ENCODE measurements at regions of chr15 and their contacts with region 1.

Region 1: DNA sequence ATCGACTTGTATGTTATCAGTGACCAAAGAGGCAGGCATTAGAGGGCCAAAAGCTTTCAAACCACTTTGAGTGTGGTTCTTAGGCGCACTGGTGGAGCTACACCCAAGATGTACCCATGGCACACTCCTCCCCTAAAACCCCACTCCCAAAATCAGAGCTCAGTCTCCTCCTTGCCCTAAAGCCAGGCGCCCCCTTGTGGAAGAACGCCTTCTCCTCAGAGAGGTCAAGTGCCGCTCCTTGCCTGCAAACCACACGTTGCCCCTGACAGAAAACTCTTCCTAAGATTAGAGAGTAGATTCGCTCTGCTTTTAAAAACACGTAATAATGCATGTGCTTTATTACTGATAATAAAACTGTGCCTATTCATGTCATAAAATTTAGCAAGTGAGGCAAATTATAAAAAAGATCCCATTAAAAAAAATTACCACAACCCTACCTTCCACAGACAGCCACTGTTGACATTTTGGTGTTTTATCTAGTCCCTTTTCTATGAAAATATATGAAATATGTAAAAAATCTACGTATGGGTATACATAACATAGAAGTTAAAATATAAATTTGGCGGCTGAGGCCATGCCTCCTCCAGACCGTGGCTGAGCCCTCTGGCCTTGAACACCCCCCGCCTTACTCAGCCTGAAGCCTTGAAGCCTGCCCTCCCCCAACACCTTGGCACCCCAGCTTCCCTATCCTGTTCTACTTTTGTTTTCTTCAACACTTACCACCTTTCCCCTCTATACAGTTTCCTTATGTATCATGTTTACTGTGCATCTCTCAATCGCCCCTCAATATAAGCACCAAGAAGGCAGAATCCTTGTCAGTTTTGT is 33.5 kb downstream of the BCL2L10 start:
- DNase-seq: peak; percentile 94
- ATAC-seq: peak; percentile 95
- H3K4me3 Mint-ChIP-seq: no peak overlapping the region; the same call in 1 of the 2 replicates
- H3K27ac Mint-ChIP-seq: no peak overlapping the region
- H3K4me1 Mint-ChIP-seq: peaks cover 5% of the 10 kb centered on the region
- H3K27me3 Mint-ChIP-seq: no peaks in the 10 kb centered on the region
- CTCF ChIP-seq: peak; percentile 83

Region 2: GRCh38 chr15:51888593-51889195 is 190.4 kb before region 1 on chr15:
- CTCF ChIA-PET with region 1: interaction called, 11 read pairs
- POLR2A ChIA-PET with region 1: no interaction called
- DNase-seq: no peak
- ATAC-seq: no peak
- H3K4me3 Mint-ChIP-seq: no peak overlapping the region
- H3K27ac Mint-ChIP-seq: no peak overlapping the region
- H3K4me1 Mint-ChIP-seq: no peaks in the 10 kb centered on the region
- H3K27me3 Mint-ChIP-seq: no peaks in the 10 kb centered on the region
- CTCF ChIP-seq: no peak

Region 3: GRCh38 chr15:51924156-51925068 is 154.7 kb before region 1 on chr15:
- CTCF ChIA-PET with region 1: interaction called, 11 read pairs
- POLR2A ChIA-PET with region 1: no interaction called
- DNase-seq: peak; percentile 38
- ATAC-seq: peak; percentile 97
- H3K4me3 Mint-ChIP-seq: no peak overlapping the region
- H3K27ac Mint-ChIP-seq: peak overlapping the region; percentile 11; the same call in 1 of the 2 replicates
- H3K4me1 Mint-ChIP-seq: peaks cover 5% of the 10 kb centered on the region
- H3K27me3 Mint-ChIP-seq: no peaks in the 10 kb centered on the region
- CTCF ChIP-seq: no peak

Region 4: GRCh38 chr15:51971375-51972133 is 107.5 kb before region 1 on chr15 and contains the start of gene LEO1:
- CTCF ChIA-PET with region 1: interaction called, 39 read pairs
- POLR2A ChIA-PET with region 1: no interaction called
- DNase-seq: peak; percentile 88
- ATAC-seq: peak; percentile 90
- H3K4me3 Mint-ChIP-seq: peak within 1 kb of the TSS; percentile 92
- H3K27ac Mint-ChIP-seq: peak within 1 kb of the TSS; percentile 91
- H3K4me1 Mint-ChIP-seq: peaks cover 11% of the 10 kb centered on the region
- H3K27me3 Mint-ChIP-seq: no peaks in the 10 kb centered on the region
- CTCF ChIP-seq: no peak
- total RNA-seq, gene LEO1: 24.9 to 28.4 TPM (median 25.0 TPM) in 3 replicates

Region 5: DNA sequence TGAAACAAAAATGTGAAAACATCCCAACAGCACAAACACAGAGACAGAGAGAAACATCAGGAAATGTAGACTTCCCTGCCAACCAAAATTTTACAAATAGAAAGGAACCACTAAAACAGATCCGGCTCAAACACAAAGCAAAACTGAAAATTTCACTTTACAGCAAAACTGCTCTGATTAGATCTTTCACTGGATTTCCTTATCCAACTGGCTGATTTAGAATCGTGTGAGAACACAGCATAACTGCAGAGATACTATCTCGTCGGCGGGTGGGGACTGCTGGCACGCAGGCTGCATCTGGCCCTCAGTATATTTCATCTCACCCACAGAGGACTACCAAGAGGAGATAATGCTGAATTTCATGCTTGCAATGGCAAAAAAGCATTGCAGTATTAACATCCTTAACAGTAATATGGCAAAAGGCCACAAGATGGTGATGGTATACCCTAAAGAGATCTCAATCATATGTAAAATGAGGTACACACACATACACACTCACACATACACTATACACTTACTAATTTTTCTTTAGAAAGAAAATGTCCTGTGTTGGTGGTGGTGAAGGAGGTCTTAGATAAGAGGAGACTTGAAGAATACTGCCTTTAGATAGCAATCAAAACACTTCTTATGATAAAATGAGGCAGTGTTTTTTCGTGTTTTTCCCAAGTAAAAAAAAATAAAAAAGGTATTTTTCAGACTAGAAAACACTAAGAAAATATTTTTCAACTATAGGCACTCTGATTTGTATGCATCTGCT is 96.9 kb before region 1 on chr15:
- CTCF ChIA-PET with region 1: interaction called, 10 read pairs
- POLR2A ChIA-PET with region 1: no interaction called
- DNase-seq: no peak
- ATAC-seq: peak; percentile 77
- H3K4me3 Mint-ChIP-seq: no peak overlapping the region
- H3K27ac Mint-ChIP-seq: 0 out of 2 replicates have a peak overlapping the region, but pooled peaks have one; percentile 52
- H3K4me1 Mint-ChIP-seq: no peaks in the 10 kb centered on the region
- H3K27me3 Mint-ChIP-seq: no peaks in the 10 kb centered on the region
- CTCF ChIP-seq: no peak

Region 6: DNA sequence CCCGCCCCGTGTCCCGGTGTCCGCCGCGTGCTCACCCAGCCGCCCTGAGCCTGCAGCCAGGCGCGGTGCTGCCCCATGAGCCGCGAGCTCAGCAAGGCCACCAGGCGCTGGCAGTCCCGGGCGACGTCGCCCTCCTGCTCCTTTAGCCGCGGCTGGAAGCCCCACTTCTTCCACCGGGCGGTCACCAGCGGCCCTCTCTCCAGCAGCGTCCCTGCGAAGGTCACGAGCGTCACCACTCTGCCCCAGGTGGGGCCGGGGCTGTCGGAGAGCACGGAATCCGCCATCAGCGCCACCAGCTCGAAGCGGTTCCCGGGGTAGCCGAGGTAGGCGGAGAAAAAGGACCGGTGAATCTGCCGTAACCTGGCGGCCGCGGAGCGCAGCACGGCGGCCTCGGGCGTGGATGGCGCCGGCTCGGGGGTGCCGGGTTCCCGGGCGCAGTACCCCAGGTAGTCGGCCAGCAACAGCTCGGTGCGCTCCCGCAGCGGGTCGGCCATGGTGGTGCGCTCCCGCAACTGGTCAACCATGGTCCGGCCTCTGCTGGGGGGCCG is 33.2 kb after region 1 on chr15:
- CTCF ChIA-PET with region 1: interaction called, 32 read pairs
- POLR2A ChIA-PET with region 1: no interaction called
- DNase-seq: peak; percentile 66
- ATAC-seq: peak; percentile 76
- H3K4me3 Mint-ChIP-seq: peak overlapping the region; percentile 61
- H3K27ac Mint-ChIP-seq: no peak overlapping the region
- H3K4me1 Mint-ChIP-seq: peaks cover 29% of the 10 kb centered on the region
- H3K27me3 Mint-ChIP-seq: peaks cover 55% of the 10 kb centered on the region
- CTCF ChIP-seq: no peak

Region 7: GRCh38 chr15:52139599-52140491 is 60.8 kb after region 1 on chr15:
- CTCF ChIA-PET with region 1: interaction called, 15 read pairs
- POLR2A ChIA-PET with region 1: no interaction called
- DNase-seq: peak; percentile 88
- ATAC-seq: peak; percentile 89
- H3K4me3 Mint-ChIP-seq: no peak overlapping the region
- H3K27ac Mint-ChIP-seq: peak overlapping the region; percentile 27; the same call in 1 of the 2 replicates
- H3K4me1 Mint-ChIP-seq: peaks cover 10% of the 10 kb centered on the region
- H3K27me3 Mint-ChIP-seq: no peaks in the 10 kb centered on the region
- CTCF ChIP-seq: peak; percentile 78; the same call in 1 of the 2 replicates

Region 8: DNA sequence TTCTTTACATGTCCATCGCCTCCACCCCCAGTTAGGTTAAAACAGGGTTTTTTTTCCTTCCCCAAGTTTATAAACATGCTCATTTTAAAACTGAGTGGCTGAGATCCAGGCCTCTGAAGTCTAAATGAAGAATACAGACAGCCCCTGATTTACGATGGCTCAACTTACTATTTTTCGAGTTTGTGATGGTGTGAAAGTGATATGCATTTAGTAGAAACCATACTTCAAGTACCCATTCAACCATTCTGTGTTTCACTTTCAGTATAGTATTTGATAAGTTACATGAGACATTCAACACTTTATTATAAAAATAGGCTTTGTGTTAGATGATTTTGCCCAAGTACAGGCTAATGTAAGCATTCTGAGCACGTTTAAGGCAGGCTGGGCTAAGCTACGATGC is 142.6 kb after region 1 on chr15:
- CTCF ChIA-PET with region 1: no interaction called
- POLR2A ChIA-PET with region 1: no interaction called
- DNase-seq: no peak
- ATAC-seq: no peak
- H3K4me3 Mint-ChIP-seq: no peak overlapping the region
- H3K27ac Mint-ChIP-seq: peak overlapping the region; percentile 26; the same call in 1 of the 2 replicates
- H3K4me1 Mint-ChIP-seq: no peaks in the 10 kb centered on the region
- H3K27me3 Mint-ChIP-seq: no peaks in the 10 kb centered on the region
- CTCF ChIP-seq: no peak

Measured in WTC11 (cell line).